HepG2 (cell line): ENCODE measurements at regions of chr15 and their contacts with region 1.

Region 1: DNA sequence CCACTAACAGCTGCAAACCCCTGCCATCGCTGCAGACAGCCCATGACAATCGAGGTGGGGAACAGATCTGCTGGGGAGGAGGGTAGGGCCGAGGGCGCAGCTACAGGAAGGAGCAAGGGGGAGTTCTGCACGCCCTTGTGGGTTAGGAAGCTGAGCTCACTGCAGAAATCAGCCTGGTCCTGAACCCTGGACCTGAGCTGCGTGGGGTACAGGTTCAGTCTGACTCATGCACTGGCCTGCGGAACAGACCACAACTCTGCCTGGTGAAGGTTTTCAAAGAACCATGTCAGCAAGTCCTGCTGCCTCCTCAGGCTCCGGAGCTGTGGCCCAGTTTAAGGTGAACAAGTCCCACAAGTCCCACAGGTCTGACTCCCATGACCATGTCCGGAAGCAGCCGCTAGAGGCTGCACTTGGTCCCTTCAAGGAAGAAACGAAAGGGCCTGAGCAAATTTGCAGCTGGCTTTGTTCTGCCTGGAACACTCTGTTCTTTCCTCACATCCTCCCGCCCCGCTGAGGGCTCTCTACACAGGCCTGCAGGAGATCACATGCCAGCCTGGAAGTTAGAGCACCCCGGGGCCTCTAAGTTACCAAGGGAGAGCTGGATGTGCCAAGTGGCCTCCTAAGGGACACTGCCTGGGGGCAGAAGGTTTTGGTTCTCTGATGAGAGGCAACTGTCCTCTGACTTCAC is 49.4 kb upstream of the AKAP13 start:
- DNase-seq: peak; percentile 88
- ATAC-seq: peak; percentile 92
- H3K4me3 ChIP-seq: peak overlapping the region; percentile 46 to 74 (median 65)
- H3K27ac ChIP-seq: peak overlapping the region; percentile 31
- H3K4me1 ChIP-seq: peaks cover 60% of the 10 kb centered on the region
- H3K27me3 ChIP-seq: no peaks in the 10 kb centered on the region; a peak in 2 of 5 replicates
- CTCF ChIP-seq: peak; percentile 89
- EP300 ChIP-seq: peak in 1 of 2 experiments; percentile 42; a peak in 1 of 4 replicates
- POLR2A ChIP-seq: 0 out of 4 replicates have a peak, but pooled peaks of 1 of the 2 experiments have one; percentile 33
- RAD21 ChIP-seq: peak; percentile 92

Region 2: DNA sequence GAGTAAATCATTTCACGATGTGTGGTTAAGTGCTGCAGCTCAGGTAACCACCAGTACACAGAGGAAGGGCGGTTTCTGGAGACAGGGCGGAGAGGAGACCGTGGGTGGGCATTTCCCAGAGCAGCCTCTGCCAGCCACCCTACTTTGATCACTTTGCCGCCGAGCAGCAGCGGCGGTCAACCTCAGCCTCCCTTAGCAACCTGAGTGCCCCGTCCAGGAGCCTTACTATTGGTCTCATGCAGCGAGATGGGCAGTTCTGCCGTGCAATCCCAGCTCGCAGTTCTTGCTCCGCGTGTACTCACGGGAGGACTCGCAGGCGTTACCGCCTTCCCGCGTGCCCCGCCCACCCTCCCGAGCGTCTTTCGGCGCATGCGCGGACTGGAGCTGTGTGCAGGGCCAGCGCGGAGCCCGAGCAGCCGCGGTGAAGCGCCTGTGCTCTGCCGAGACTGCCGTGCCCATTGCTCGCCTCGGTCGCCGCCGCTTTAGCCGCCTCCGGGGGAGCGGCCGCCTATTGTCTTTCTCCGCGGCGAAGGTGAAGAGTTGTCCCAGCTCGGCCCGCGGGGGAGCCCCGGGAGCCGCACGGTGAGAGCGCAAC is 49.3 kb after region 1 on chr15 and contains the start of gene AKAP13:
- CTCF ChIA-PET with region 1: no interaction called
- POLR2A ChIA-PET with region 1: interaction called, 4 read pairs
- in situ Hi-C with region 1: no loop called
- intact Hi-C with region 1: loop called (anchors 5 kb)
- DNase-seq: peak; percentile 98
- ATAC-seq: peak; percentile 95
- H3K4me3 ChIP-seq: peak within 1 kb of the TSS; percentile 74 to 88 (median 85)
- H3K27ac ChIP-seq: peak within 1 kb of the TSS; percentile 93
- H3K4me1 ChIP-seq: peaks cover 45% of the 10 kb centered on the region
- H3K27me3 ChIP-seq: peaks cover 0 to 9% of the 10 kb centered on the region in 2 experiments; a peak in 2 of 5 replicates
- CTCF ChIP-seq: no peak
- EP300 ChIP-seq: no peak
- POLR2A ChIP-seq: peak; percentile 84 to 90
- RAD21 ChIP-seq: peak; percentile 22; the same call in 1 of the 2 replicates
- total RNA-seq, gene AKAP13: 27.1 and 30.8 TPM in 2 replicates

Region 3: DNA sequence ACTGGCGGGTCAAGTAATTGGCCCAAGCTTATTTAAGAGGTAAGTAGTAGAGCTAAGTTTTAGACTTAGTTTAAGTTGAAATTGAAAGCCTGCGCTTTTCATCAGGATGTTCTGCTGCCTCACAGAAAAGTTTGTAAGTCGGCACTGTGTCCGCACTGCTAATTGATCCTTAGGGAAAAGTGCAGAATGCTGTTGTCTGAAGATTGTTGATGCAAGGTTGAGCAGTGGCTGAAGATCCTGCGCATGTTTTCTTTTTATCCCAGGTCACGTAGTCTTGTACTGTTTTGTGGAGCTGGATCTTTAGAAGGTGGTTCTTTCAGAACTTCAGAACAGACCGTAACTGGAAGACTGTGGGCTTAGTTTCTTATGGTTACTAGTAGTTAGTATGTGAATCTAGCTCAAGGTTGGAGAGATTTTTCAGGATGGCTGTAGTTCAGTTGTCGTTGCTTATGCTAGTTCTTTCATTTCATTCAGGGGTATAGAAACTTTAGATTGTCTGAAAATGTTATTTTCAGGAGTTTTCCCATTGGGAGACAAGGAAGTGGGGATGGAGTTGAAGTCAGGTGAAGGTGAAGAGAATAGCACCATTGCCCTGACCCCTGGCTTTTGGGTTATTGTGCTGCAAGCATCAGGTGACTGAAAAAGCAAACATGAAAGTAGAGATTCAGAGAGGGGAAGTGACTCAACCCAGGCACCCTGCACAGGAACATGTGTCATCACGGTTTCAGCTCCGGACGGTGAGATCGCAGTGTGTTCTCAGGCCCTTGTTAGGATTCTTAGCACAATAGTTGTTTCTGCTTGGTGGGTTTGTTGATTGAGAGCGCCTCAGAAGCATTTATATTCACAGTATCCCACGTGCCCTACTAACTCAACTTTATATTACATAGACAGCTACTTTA is 82.2 kb after region 1 on chr15:
- CTCF ChIA-PET with region 1: interaction called, 4 read pairs
- POLR2A ChIA-PET with region 1: interaction called, 3 read pairs
- in situ Hi-C with region 1: no loop called
- intact Hi-C with region 1: loop called (anchors 10 kb)
- DNase-seq: peak; percentile 90
- ATAC-seq: peak; percentile 100
- H3K4me3 ChIP-seq: no peak overlapping the region
- H3K27ac ChIP-seq: peak overlapping the region; percentile 52
- H3K4me1 ChIP-seq: peaks cover 34% of the 10 kb centered on the region
- H3K27me3 ChIP-seq: no peaks in the 10 kb centered on the region; a peak in 1 of 5 replicates
- CTCF ChIP-seq: 0 out of 2 replicates have a peak, but pooled peaks have one; percentile 11
- EP300 ChIP-seq: peak; percentile 14 to 83; a peak in 2 of 4 replicates
- POLR2A ChIP-seq: no peak
- RAD21 ChIP-seq: no peak

Region 4: DNA sequence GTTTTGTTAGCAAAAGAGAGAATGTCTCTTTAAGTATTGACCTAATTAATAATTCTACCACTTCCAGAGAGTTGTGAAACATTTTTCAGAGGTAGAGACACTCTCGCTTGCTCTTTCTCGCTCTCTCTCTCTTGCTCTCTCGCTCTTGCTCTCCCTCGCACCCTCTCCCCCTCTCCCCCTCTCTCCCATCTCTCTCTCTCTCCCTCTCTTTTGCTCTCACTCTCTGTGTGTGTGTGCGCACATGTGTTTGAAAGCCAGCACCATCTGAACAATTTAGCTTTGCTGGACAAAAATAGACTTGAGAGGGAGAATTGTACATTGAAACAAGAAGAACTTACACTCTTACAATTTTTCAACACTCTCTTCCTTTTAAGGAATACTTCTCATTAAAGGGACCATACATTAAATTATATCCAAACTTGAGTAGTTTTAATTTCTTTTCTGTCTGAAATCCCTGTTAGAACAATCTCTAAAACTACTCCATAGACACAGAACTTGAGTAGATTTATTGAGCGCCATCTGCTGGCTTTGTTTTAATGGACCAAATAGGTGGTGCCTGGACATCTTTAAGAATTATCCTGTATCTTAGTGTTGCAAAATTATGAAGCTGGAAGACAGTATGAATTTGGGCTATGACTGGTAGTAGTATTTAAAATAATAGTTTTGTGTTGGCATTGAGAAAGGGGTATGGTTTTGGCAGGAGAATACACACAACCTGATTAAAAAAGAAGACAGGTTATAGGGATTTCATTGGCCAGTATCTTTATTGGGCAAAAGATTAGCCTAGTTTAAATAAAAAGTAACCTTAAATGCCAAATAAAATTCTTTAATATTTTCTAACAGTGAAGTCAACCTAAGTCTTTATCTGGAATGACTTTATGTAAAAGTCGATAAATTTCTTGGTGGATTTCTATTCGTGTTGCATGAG is 174.0 kb after region 1 on chr15:
- CTCF ChIA-PET with region 1: interaction called, 7 read pairs
- POLR2A ChIA-PET with region 1: no interaction called
- in situ Hi-C with region 1: no loop called
- intact Hi-C with region 1: loop called (anchors 5 kb)
- DNase-seq: peak; percentile 53
- ATAC-seq: peak; percentile 62; the same call in 2 of the 3 replicates
- H3K4me3 ChIP-seq: no peak overlapping the region
- H3K27ac ChIP-seq: no peak overlapping the region
- H3K4me1 ChIP-seq: peaks cover 8% of the 10 kb centered on the region; the same call in 1 of the 2 replicates
- H3K27me3 ChIP-seq: no peaks in the 10 kb centered on the region; a peak in 1 of 5 replicates
- CTCF ChIP-seq: peak; percentile 55
- EP300 ChIP-seq: no peak
- POLR2A ChIP-seq: no peak
- RAD21 ChIP-seq: no peak